ENCODE measurements at regions of chr13 and their contacts with region 1.

Region 1: GRCh38 chr13:99027260-99027659 is 49.4 kb upstream of the DOCK9 start:
- DNase-seq: no peak
- H3K4me3 Mint-ChIP-seq: peak overlapping the region; percentile 61
- H3K27ac Mint-ChIP-seq: peak overlapping the region; percentile 85
- H3K4me1 Mint-ChIP-seq: peaks cover 67% of the 10 kb centered on the region
- H3K27me3 Mint-ChIP-seq: no peaks in the 10 kb centered on the region

Region 2: GRCh38 chr13:98664039-98664438 is 363.2 kb before region 1 on chr13:
- intact Hi-C with region 1: loop called (anchors 2 kb)
- DNase-seq: peak; percentile 21
- H3K4me3 Mint-ChIP-seq: no peak overlapping the region
- H3K27ac Mint-ChIP-seq: peak overlapping the region; percentile 72
- H3K4me1 Mint-ChIP-seq: peaks cover 15% of the 10 kb centered on the region
- H3K27me3 Mint-ChIP-seq: peaks cover 17% of the 10 kb centered on the region

Region 3: DNA sequence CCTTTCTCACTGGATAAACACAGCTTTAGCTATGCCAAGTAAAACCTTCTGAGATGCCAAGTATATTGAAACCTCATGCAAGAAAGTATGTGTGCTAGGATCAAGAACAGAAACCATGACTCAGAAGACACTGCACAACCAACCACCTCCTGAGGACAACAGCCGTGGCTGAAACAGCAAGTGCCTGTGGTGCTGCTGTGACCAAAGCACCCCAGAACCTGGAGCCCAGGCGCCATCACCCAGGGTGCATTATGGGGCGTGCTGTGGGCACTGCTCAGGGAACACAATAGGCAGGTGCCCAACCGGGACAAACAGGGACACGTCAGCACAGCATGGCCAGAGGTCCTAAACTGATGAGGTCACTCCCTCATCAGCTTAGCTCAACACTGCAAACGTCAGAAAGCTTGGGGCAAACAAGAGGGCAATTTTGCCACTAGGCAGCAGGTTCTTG is 173.5 kb before region 1 on chr13:
- intact Hi-C with region 1: loop called (anchors 1 kb)
- DNase-seq: peak; percentile 59
- H3K4me3 Mint-ChIP-seq: peak overlapping the region; percentile 36
- H3K27ac Mint-ChIP-seq: peak overlapping the region; percentile 13
- H3K4me1 Mint-ChIP-seq: peaks cover 21% of the 10 kb centered on the region
- H3K27me3 Mint-ChIP-seq: no peaks in the 10 kb centered on the region

Region 4: DNA sequence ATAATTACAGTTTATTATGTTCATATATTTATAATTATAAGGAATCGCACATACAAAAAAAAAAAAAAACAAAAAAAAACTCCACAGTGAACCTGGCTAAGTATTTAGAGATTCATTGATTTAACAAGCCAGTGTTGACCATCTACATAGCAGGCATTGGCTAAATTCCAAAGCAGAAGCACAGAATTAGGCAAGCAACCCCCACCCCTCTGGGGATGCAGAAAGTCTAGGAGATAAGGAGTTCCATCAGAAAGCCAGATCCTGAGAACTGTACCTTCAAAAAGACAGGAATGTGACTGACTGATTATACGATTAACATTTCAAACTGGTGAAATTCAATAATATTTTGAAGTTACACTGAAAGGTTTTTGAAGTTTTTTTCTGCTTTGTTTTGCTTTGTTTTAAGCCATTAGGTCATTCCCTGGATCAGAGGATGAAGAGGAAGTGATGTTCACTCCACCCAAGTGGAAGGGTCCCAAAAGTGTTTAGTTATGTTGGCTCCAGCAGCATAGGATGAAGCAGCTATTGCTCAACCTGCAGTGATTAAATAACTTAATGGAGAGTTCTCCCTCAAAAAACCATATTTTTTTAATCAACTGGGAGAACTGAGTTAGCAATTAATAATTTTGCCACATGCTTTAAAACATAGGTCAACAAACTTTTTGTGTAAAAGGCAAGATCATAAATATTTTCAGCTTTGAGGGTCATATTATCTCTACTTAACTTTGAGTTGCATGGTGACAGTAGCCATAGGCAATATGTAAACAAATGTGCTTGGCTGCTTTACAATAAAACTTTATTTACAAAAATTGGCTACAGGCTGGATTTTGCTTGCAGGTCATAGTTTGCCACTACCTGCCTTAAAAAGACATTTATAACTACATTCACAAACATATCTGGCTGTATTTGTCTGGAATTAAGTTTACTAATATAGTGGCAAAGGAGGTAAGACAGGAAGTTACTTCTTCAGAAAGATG is 99.0 kb before region 1 on chr13:
- intact Hi-C with region 1: no loop called
- DNase-seq: no peak
- H3K4me3 Mint-ChIP-seq: no peak overlapping the region
- H3K27ac Mint-ChIP-seq: no peak overlapping the region
- H3K4me1 Mint-ChIP-seq: peaks cover 7% of the 10 kb centered on the region
- H3K27me3 Mint-ChIP-seq: no peaks in the 10 kb centered on the region

Region 5: DNA sequence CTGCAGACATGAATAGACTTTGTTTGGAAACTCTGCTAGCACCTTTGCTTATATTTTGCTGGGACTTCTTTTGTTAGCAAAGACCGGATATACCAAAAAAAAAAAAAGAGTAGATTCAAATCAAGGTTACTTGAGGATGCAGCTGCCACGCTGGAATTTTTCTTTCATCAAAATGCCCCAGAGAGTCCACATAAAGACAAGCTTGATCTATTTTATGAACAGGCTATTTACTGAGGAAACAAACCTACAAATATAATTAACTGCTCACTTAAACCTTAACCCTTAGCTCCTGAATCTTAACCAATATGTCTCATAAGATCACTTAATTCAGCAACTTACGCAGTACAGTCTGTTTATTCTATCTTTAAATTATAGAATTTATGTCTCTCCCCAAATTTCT is 22.3 kb before region 1 on chr13:
- intact Hi-C with region 1: no loop called
- DNase-seq: no peak
- H3K4me3 Mint-ChIP-seq: no peak overlapping the region
- H3K27ac Mint-ChIP-seq: no peak overlapping the region
- H3K4me1 Mint-ChIP-seq: peaks cover 47% of the 10 kb centered on the region
- H3K27me3 Mint-ChIP-seq: no peaks in the 10 kb centered on the region

Region 6: DNA sequence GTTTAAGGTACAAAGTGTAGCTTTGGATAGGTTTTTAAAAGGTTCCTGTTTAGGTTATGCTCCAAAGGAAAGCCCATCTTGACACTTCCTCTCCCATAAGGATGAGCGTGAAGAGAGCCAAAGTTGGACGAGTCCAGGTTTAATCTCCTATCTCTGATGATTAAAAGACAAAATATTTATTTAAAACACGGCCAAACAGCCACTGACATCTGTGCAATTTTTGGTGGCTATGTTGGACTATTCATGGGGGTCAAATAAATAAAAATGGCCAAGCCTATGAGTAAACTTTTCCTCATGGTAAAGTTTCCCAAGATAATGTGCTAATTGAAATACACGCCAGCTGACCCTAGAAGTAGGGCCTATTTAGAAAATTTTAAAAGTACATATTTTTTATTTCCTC is 19.6 kb after region 1 on chr13:
- intact Hi-C with region 1: loop called (anchors 1 kb)
- DNase-seq: no peak
- H3K4me3 Mint-ChIP-seq: peak overlapping the region; percentile 68
- H3K27ac Mint-ChIP-seq: peak overlapping the region; percentile 91
- H3K4me1 Mint-ChIP-seq: peaks cover 93% of the 10 kb centered on the region
- H3K27me3 Mint-ChIP-seq: no peaks in the 10 kb centered on the region

Region 7: GRCh38 chr13:99124794-99125316 is 97.6 kb after region 1 on chr13:
- intact Hi-C with region 1: loop called (anchors 2 kb)
- DNase-seq: no peak
- H3K4me3 Mint-ChIP-seq: peak overlapping the region; percentile 19
- H3K27ac Mint-ChIP-seq: peak overlapping the region; percentile 31
- H3K4me1 Mint-ChIP-seq: peaks cover 21% of the 10 kb centered on the region
- H3K27me3 Mint-ChIP-seq: peaks cover 2% of the 10 kb centered on the region

Region 8: DNA sequence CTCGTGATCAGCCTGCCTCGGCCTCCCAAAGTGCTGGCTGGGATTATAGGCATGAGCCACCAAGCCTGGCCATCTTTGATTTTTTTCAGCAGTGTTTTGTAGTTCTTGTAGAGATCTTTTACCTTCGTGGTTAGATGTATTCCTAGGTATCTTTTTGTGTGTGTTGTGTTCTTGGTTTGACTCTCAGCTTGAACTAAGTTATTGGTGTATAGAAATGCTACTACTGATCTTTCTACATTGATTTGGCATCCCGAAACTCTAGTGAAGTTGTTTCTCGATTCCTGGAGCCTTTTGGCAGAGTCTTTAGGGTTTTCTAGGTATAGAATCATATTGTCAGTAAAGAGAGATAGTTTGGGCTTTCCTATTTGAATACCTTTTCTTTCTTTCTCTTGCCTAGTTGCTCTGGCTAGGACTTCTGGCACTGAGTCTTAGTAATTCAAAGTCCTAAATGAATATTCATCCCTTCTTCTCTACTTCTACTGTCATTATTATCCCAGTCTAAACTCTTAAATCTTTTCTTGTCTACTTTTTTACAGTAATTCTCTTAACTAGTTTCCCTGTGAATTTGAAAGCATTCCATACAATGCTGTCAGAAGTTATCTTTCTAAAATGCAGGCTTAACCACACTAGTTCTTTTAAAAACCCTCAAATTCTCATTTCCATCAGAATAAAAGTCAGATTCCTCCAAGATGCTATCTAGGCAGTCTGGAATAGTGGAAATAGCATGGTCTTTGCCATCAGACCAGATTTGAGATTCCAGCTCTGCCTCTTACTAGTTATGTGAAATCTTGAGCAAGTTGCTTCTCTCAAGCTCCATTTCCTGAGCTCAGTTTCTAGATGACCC is 223.9 kb after region 1 on chr13:
- intact Hi-C with region 1: no loop called
- DNase-seq: no peak
- H3K4me3 Mint-ChIP-seq: no peak overlapping the region
- H3K27ac Mint-ChIP-seq: no peak overlapping the region
- H3K4me1 Mint-ChIP-seq: peaks cover 42% of the 10 kb centered on the region
- H3K27me3 Mint-ChIP-seq: no peaks in the 10 kb centered on the region